Caco-2 (cell line): ENCODE measurements at regions of chr5 and their contacts with region 1.

Region 1: DNA sequence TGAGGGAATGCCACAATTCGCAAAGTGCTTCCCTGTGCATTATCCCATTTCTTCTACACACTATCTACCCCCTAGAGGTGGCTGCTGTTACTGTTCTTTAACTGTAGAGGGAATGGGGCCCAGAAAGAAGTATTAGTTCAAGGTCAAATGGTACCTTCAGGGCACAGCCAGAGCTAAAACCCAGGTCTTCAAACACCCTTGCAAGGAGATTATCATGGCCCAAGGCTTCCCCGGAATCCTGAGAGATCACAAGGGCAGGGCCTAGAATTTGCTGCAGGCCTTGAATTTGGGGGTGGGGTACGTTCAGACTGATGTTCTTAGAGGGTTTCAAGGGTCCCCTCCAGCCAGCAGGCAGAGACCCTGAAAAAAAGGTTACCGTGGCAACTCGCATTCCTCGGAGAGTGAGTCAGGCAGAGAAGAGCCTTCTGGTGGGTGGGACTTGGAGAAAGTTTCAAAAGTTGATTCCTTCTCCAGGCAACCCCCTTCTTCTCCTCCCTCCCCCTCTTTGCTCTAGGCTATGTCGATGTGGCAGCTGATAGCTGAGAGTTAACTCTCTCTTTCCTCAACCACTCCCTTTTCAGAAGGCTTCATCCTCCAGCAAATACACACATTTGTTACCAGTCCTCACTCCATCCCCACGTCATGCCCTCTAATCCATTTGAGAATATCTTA is 1.9 kb downstream of the SPARC start:
- DNase-seq: peak; percentile 78 to 81
- H3K4me3 ChIP-seq: no peak overlapping the region
- H3K4me3 Mint-ChIP-seq: peak overlapping the region; percentile 6
- H3K27ac Mint-ChIP-seq: peak overlapping the region; percentile 34
- H3K4me1 ChIP-seq: peaks cover 42% of the 10 kb centered on the region
- H3K4me1 Mint-ChIP-seq: peaks cover 27% of the 10 kb centered on the region
- H3K27me3 ChIP-seq: no peaks in the 10 kb centered on the region
- H3K27me3 Mint-ChIP-seq: no peaks in the 10 kb centered on the region
- CTCF ChIP-seq: no peak

Region 2: GRCh38 chr5:151699071-151699901 is 14.5 kb after region 1 on chr5:
- CTCF ChIA-PET with region 1: no interaction called
- POLR2A ChIA-PET with region 1: no interaction called
- intact Hi-C with region 1: loop called (anchors 2 kb)
- DNase-seq: peak; percentile 56 to 72
- H3K4me3 ChIP-seq: no peak overlapping the region
- H3K4me3 Mint-ChIP-seq: peak overlapping the region; percentile 30
- H3K27ac Mint-ChIP-seq: peak overlapping the region; percentile 83
- H3K4me1 ChIP-seq: peaks cover 35% of the 10 kb centered on the region
- H3K4me1 Mint-ChIP-seq: peaks cover 26% of the 10 kb centered on the region
- H3K27me3 ChIP-seq: no peaks in the 10 kb centered on the region
- H3K27me3 Mint-ChIP-seq: no peaks in the 10 kb centered on the region
- CTCF ChIP-seq: no peak

Region 3: DNA sequence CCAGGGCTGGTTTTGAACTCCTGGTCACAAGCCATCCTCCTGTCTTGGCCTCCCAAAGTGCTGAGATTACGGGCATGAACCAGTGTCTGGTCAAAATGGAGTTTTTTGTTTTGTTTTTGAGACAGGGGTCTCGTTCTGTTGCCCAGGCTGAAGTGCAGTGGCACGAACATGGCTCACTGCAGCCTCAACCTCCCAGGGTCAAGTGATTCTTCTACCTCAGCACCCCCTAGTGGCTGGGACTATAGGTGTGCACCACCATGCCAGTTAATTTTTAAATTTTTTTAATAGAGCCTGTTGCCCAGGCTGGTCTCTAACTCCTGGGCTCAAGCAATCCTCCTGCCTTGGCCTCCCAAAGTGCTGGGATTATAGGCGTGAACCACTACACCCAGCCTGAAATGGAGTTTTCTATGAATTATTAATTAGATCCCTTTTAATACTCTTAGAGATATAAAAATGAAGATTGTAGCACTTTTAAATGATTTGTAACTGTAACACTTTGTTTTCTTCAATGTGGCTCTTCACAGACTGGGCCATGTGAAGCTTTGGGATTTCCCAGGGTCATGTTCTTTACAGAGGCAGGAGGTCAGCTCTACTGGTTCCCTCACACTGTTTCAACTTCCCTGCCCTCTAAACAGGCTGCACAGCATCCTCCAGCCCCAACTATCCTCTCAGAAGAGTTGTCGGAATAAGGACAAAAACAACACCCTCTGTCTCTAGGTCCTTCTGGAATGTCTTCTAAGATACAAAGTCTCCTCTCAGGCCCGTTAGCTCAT is 34.6 kb after region 1 on chr5:
- CTCF ChIA-PET with region 1: no interaction called
- POLR2A ChIA-PET with region 1: no interaction called
- intact Hi-C with region 1: no loop called
- DNase-seq: peak in 1 of 2 experiments; percentile 42
- H3K4me3 ChIP-seq: no peak overlapping the region
- H3K4me3 Mint-ChIP-seq: no peak overlapping the region
- H3K27ac Mint-ChIP-seq: no peak overlapping the region
- H3K4me1 ChIP-seq: no peaks in the 10 kb centered on the region
- H3K4me1 Mint-ChIP-seq: no peaks in the 10 kb centered on the region
- H3K27me3 ChIP-seq: no peaks in the 10 kb centered on the region
- H3K27me3 Mint-ChIP-seq: no peaks in the 10 kb centered on the region
- CTCF ChIP-seq: peak; percentile 30 to 38

Region 4: DNA sequence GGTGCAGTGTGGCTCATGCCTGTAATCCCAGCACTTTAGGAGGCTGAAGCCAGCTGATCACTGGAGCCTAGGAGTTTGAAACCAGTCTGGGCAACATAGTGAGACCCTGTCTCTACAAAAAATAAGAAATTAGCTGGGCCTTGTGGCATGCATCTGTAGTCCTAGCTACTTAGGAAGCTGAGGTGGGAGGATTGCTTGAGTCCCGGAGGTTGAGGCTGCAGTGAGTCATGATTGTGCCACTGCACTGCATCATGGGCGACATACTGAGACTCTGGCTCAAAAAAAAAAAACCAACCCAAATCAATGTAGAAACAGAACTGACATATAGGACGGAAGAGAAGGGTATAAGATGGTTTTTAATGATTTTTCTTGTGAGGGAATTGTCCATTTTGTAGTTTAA is 114.6 kb after region 1 on chr5:
- CTCF ChIA-PET with region 1: no interaction called
- POLR2A ChIA-PET with region 1: no interaction called
- intact Hi-C with region 1: no loop called
- DNase-seq: no peak
- H3K4me3 ChIP-seq: no peak overlapping the region
- H3K4me3 Mint-ChIP-seq: no peak overlapping the region
- H3K27ac Mint-ChIP-seq: no peak overlapping the region
- H3K4me1 ChIP-seq: no peaks in the 10 kb centered on the region
- H3K4me1 Mint-ChIP-seq: peaks cover 6% of the 10 kb centered on the region
- H3K27me3 ChIP-seq: no peaks in the 10 kb centered on the region
- H3K27me3 Mint-ChIP-seq: no peaks in the 10 kb centered on the region
- CTCF ChIP-seq: no peak